Activated B cell treated with CpG ODN at 0.5 μM for 24 hours (primary cell): ENCODE measurements at regions of chr12 and their contacts with region 1.

Region 1: DNA sequence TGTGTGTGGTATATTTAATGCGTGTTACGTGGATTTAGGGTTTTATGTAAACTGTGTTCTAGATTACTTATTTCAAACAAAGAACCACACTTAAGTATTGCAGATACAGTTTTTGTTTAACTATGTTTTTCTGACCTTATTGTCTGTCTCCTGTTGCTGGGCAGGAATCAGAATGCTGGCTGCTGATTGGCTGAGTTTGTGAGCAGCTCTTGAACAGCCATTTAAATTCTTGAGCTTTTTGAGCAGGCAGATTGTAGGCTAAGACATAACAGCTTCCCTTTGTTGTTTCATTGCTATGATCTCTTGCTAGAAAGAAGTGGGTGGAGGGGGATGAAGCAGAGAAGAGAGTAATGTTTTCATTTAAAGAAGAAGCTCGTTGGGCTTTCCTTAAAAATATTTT is 52.2 kb downstream of the ATF7IP start:
- DNase-seq: no peak
- ATAC-seq: peak; percentile 59
- H3K4me3 Mint-ChIP-seq: peak overlapping the region; percentile 58
- H3K27ac Mint-ChIP-seq: peak overlapping the region; percentile 82
- H3K4me1 Mint-ChIP-seq: peaks cover 55% of the 10 kb centered on the region
- H3K27me3 Mint-ChIP-seq: no peaks in the 10 kb centered on the region
- CTCF ChIP-seq: no peak

Region 2: DNA sequence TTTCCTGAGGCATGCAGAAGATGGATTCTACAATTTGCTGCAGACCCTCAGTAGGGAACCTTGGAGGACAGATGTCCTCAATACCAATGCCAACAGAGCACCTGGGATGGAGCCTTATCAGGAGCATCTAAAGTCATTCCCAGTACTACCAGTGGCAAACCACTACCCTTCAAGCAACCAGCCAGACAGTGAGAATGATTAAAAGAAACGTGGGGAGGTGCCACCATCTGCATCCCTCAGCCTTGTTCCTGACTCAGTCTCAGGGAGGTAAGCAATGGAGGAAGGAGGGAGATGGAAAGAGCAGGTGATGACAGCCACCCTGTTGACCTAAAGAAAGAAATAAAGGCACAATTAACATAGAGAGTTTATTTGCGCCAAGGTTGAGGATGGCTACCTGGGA is 261.1 kb before region 1 on chr12:
- CTCF ChIA-PET with region 1: no interaction called
- POLR2A ChIA-PET with region 1: no interaction called
- intact Hi-C with region 1: no loop called
- DNase-seq: no peak
- ATAC-seq: peak; percentile 2
- H3K4me3 Mint-ChIP-seq: peak overlapping the region; percentile 62
- H3K27ac Mint-ChIP-seq: peak overlapping the region; percentile 97
- H3K4me1 Mint-ChIP-seq: peaks cover 72% of the 10 kb centered on the region
- H3K27me3 Mint-ChIP-seq: no peaks in the 10 kb centered on the region
- CTCF ChIP-seq: no peak

Region 3: GRCh38 chr12:14394317-14395073 is 23.2 kb before region 1 on chr12:
- CTCF ChIA-PET with region 1: interaction called, 5 read pairs
- POLR2A ChIA-PET with region 1: interaction called, 6 read pairs
- intact Hi-C with region 1: loop called (anchors 2 kb)
- DNase-seq: no peak
- ATAC-seq: peak; percentile 75
- H3K4me3 Mint-ChIP-seq: peak overlapping the region; percentile 77
- H3K27ac Mint-ChIP-seq: peak overlapping the region; percentile 90
- H3K4me1 Mint-ChIP-seq: peaks cover 82% of the 10 kb centered on the region
- H3K27me3 Mint-ChIP-seq: no peaks in the 10 kb centered on the region
- CTCF ChIP-seq: no peak

Region 4: GRCh38 chr12:14403711-14404196 is 14.0 kb before region 1 on chr12:
- CTCF ChIA-PET with region 1: no interaction called
- POLR2A ChIA-PET with region 1: interaction called, 4 read pairs
- intact Hi-C with region 1: loop called (anchors 1 kb)
- DNase-seq: no peak
- ATAC-seq: peak; percentile 67
- H3K4me3 Mint-ChIP-seq: peak overlapping the region; percentile 69
- H3K27ac Mint-ChIP-seq: peak overlapping the region; percentile 90
- H3K4me1 Mint-ChIP-seq: peaks cover 75% of the 10 kb centered on the region
- H3K27me3 Mint-ChIP-seq: no peaks in the 10 kb centered on the region
- CTCF ChIP-seq: no peak

Region 5: DNA sequence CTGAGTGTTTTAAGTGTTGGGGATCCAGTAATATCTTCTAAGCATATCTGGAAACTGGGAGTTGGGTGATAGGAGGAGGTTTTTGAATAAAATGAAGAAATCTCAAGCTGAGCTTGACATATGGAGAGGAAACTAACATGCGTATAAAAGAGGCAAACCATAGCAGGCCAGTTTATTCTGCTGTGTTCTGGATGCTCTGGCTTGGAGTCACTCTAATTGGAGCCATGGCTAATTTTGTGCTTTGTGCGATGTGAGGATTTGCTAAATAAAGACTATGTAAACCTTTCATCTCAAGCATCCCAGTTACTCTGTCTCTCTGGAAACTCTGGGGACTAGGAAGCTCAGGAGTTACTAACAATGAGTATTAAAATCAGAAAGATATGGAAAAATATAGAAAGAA is 14.3 kb after region 1 on chr12:
- CTCF ChIA-PET with region 1: no interaction called
- POLR2A ChIA-PET with region 1: no interaction called
- intact Hi-C with region 1: loop called (anchors 2 kb)
- DNase-seq: no peak
- ATAC-seq: no peak
- H3K4me3 Mint-ChIP-seq: peak overlapping the region; percentile 19
- H3K27ac Mint-ChIP-seq: no peak overlapping the region
- H3K4me1 Mint-ChIP-seq: peaks cover 48% of the 10 kb centered on the region
- H3K27me3 Mint-ChIP-seq: no peaks in the 10 kb centered on the region
- CTCF ChIP-seq: no peak

Region 6: GRCh38 chr12:14558473-14558959 is 140.8 kb after region 1 on chr12:
- CTCF ChIA-PET with region 1: no interaction called
- POLR2A ChIA-PET with region 1: no interaction called
- intact Hi-C with region 1: no loop called
- DNase-seq: no peak
- ATAC-seq: no peak
- H3K4me3 Mint-ChIP-seq: no peak overlapping the region
- H3K27ac Mint-ChIP-seq: peak overlapping the region; percentile 51
- H3K4me1 Mint-ChIP-seq: peaks cover 26% of the 10 kb centered on the region
- H3K27me3 Mint-ChIP-seq: no peaks in the 10 kb centered on the region
- CTCF ChIP-seq: no peak